Activated CD4-positive, alpha-beta memory T cell treated with anti-CD3 and anti-CD28 coated beads for 36 hours (primary cell): ENCODE measurements at regions of chr1 and their contacts with region 1.

Region 1: GRCh38 chr1:229714964-229715603 is 89.0 kb downstream of the URB2 start:
- DNase-seq: peak; percentile 71
- H3K4me3 Mint-ChIP-seq: no peak overlapping the region
- H3K27ac Mint-ChIP-seq: no peak overlapping the region
- H3K4me1 Mint-ChIP-seq: no peaks in the 10 kb centered on the region
- H3K27me3 Mint-ChIP-seq: peaks cover under 1% of the 10 kb centered on the region

Region 2: DNA sequence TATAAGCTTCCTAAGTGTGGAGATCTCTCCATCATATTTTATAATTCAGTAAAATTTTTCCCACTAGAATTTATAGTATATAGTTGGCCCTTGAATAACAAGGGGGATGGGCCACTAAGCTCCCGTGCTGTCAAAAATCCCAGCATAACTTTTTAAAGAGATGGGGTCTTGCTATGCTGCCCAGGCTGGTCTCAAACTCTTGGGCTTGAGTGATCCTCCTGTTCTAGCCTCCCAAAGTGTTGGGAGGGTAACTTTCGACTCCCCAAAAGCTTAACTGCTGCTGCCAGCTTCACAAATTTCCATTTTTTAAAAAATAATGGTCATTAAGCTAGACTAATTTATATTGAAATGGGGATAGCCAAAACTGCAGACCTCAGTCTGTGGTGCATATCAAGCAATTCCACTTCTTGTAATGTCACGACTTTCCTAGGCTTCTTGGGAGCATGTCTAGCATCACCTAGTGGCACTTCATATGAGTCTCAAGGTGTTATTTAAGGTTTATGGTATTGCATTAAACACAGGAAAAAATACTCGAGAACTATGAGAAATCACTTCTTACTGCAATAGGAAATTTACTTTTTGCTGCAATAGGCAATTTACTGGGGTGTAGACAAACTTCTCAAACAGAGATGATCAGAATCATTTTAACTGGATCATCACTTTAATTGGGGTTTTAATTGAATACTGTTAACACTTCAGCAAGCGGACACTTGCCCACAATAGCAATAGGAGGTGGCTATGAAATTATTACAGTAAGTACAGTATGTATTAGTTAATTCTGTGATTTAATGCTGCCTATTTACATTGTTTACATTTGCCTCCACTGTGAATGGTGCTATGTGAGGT is 261.9 kb before region 1 on chr1:
- CTCF ChIA-PET with region 1: no interaction called
- POLR2A ChIA-PET with region 1: no interaction called
- intact Hi-C with region 1: no loop called
- DNase-seq: no peak
- H3K4me3 Mint-ChIP-seq: no peak overlapping the region
- H3K27ac Mint-ChIP-seq: no peak overlapping the region
- H3K4me1 Mint-ChIP-seq: no peaks in the 10 kb centered on the region
- H3K27me3 Mint-ChIP-seq: no peaks in the 10 kb centered on the region

Region 3: GRCh38 chr1:229640455-229640854 is 74.6 kb before region 1 on chr1:
- CTCF ChIA-PET with region 1: no interaction called
- POLR2A ChIA-PET with region 1: no interaction called
- intact Hi-C with region 1: no loop called
- DNase-seq: no peak
- H3K4me3 Mint-ChIP-seq: no peak overlapping the region
- H3K27ac Mint-ChIP-seq: no peak overlapping the region
- H3K4me1 Mint-ChIP-seq: no peaks in the 10 kb centered on the region
- H3K27me3 Mint-ChIP-seq: no peaks in the 10 kb centered on the region

Region 4: DNA sequence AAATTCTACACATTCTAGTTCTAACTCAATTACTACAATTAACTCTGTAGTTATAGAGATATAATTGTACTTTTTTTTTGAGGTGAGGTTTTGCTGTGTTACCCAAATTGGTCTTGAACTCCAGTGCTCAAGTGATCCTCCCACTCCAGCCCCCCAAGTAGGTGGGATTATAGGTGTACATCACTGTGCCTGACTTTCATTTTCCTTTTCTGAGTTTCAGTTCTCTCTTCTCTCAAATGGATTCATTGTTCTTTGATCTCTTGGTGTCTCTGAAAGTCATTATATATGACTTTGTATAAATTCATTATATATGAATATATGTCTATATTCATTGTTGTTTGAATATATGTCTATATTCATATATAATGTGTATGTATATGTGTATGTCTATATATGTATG is 278.0 kb after region 1 on chr1:
- CTCF ChIA-PET with region 1: no interaction called
- POLR2A ChIA-PET with region 1: no interaction called
- intact Hi-C with region 1: no loop called
- DNase-seq: no peak
- H3K4me3 Mint-ChIP-seq: no peak overlapping the region
- H3K27ac Mint-ChIP-seq: no peak overlapping the region
- H3K4me1 Mint-ChIP-seq: no peaks in the 10 kb centered on the region
- H3K27me3 Mint-ChIP-seq: peaks cover 1% of the 10 kb centered on the region

Region 5: GRCh38 chr1:230167419-230167852 is 452.4 kb after region 1 on chr1:
- CTCF ChIA-PET with region 1: interaction called, 11 read pairs
- POLR2A ChIA-PET with region 1: no interaction called
- intact Hi-C with region 1: loop called (anchors 2 kb)
- DNase-seq: peak; percentile 55
- H3K4me3 Mint-ChIP-seq: no peak overlapping the region
- H3K27ac Mint-ChIP-seq: no peak overlapping the region
- H3K4me1 Mint-ChIP-seq: peaks cover 34% of the 10 kb centered on the region
- H3K27me3 Mint-ChIP-seq: no peaks in the 10 kb centered on the region

Region 6: DNA sequence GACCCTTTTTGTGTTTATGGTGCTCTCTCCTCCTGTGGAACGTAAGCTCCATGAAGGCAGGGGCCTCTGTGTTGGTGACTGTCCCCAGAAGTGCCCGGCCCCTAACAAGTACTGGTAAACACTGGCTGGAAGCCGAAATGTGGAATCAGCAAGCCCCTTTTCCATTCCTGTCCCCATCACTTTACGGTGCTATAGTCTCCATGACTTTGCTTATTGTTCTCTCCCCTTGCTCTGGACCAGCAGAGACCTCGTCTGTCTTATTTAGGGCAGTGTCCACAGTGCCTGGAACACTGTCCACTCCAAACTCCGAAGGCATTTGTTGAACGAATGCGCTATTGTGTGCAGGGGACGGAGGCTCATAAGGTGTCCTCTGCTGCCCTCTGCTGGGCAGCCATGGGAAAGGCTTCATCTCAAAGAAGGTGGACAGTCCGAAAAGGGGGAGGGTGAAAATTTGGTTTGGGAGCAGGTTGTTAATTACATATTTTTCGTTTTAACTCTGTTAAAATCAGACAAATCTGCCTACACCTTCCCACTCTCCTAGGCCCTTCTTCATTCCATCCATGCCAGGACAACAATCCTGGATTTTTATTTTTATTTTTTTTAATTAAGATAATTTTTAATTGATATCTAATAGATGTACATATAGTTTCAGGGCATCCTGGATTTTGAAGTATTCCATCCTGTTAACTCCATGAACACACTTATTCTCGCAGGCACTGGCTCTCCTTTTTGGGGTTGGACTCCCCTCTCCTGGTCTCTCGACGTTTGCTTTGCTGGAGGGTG is 595.5 kb after region 1 on chr1:
- CTCF ChIA-PET with region 1: interaction called, 15 read pairs
- POLR2A ChIA-PET with region 1: no interaction called
- intact Hi-C with region 1: loop called (anchors 1 kb)
- DNase-seq: peak; percentile 77
- H3K4me3 Mint-ChIP-seq: no peak overlapping the region
- H3K27ac Mint-ChIP-seq: no peak overlapping the region
- H3K4me1 Mint-ChIP-seq: peaks cover 14% of the 10 kb centered on the region
- H3K27me3 Mint-ChIP-seq: peaks cover 6% of the 10 kb centered on the region